ENCODE measurements at regions of chr15 and their contacts with region 1.

Region 1: GRCh38 chr15:50765195-50765973 is at the start of gene SPPL2A:
- DNase-seq: peak; percentile 45 to 90 (median 61)
- ATAC-seq: peak; percentile 91
- H3K4me3 ChIP-seq: peak within 1 kb of the TSS; percentile 77
- H3K4me3 Mint-ChIP-seq: peak within 1 kb of the TSS; percentile 81 to 97 (median 94)
- H3K27ac ChIP-seq: peak within 1 kb of the TSS; percentile 90
- H3K27ac Mint-ChIP-seq: peak within 1 kb of the TSS; percentile 85 to 98 (median 93)
- H3K4me1 ChIP-seq: no peaks in the 10 kb centered on the region
- H3K4me1 Mint-ChIP-seq: peaks cover 27 to 58% (median 51%) of the 10 kb centered on the region in 7 donors
- H3K27me3 ChIP-seq: no peaks in the 10 kb centered on the region
- H3K27me3 Mint-ChIP-seq: no peaks in the 10 kb centered on the region
- total RNA-seq, gene SPPL2A: 42.1 to 100 (median 58.1) TPM

Region 2: GRCh38 chr15:49155110-49155833 is 1610.1 kb before region 1 on chr15 and contains the start of gene COPS2:
- CTCF ChIA-PET with region 1: no interaction called
- POLR2A ChIA-PET with region 1: no interaction called
- intact Hi-C with region 1: loop called in 1 of 2 experiments (anchors 10 kb)
- DNase-seq: peak; percentile 69 to 96 (median 94)
- ATAC-seq: peak; percentile 99
- H3K4me3 ChIP-seq: peak within 1 kb of the TSS; percentile 88
- H3K4me3 Mint-ChIP-seq: peak within 1 kb of the TSS; percentile 95 to 100 (median 98)
- H3K27ac ChIP-seq: peak within 1 kb of the TSS; percentile 93
- H3K27ac Mint-ChIP-seq: peak within 1 kb of the TSS; percentile 93 to 100 (median 97)
- H3K4me1 ChIP-seq: peaks cover 9 to 25% of the 10 kb centered on the region in 2 donors
- H3K4me1 Mint-ChIP-seq: peaks cover 40 to 72% (median 59%) of the 10 kb centered on the region in 7 donors
- H3K27me3 ChIP-seq: no peaks in the 10 kb centered on the region
- H3K27me3 Mint-ChIP-seq: no peaks in the 10 kb centered on the region
- total RNA-seq, gene COPS2: 51.0 to 91.5 (median 63.6) TPM

Region 3: DNA sequence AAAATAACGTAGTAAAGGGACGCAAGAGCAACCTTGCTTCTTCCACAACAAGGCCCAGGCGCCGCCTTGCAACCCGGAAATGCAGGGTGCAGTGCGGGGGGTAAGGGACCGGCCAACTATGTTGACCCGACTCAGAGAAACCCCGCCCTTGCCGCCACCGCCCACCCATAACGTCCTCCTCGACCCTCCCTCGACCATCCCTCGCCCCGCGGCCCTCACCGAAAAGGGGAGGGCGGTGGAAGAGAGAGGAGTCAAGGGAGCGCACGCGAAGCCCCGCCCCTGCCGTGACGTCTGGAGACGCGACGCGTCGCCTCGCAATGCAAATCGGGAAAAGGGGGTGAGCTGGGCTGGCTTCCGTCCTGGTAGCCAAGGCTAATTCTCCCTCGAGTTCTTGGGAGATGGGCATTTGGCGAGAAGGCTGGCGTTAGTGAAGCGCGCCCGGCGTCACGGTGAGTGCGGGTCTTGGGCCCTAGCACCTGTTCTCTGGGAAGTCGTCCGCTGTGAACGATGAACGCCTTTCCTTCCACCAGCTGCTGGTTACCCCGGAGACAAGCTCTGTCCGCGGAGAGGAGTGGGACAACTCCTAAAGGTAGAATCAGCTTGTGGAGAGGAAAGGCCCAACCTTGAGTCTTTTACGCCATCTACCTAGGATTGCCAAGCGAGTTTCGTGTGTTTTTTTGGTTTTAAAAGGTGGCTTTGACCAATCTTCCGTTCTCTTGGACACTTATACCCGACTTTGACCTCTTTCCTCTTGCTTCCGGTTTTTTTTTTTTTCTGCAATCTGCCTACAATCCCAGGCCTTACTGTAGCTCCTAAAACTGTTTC is 341.1 kb before region 1 on chr15 and contains the start of gene USP8:
- CTCF ChIA-PET with region 1: no interaction called
- POLR2A ChIA-PET with region 1: no interaction called
- intact Hi-C with region 1: loop called (anchors 1 to 10 kb)
- DNase-seq: peak; percentile 88 to 95 (median 93)
- ATAC-seq: peak; percentile 98
- H3K4me3 ChIP-seq: peak within 1 kb of the TSS; percentile 91
- H3K4me3 Mint-ChIP-seq: peak within 1 kb of the TSS; percentile 86 to 100 (median 98)
- H3K27ac ChIP-seq: peak within 1 kb of the TSS; percentile 93
- H3K27ac Mint-ChIP-seq: peak within 1 kb of the TSS; percentile 91 to 99 (median 97)
- H3K4me1 ChIP-seq: peaks cover 8 to 20% of the 10 kb centered on the region in 2 donors
- H3K4me1 Mint-ChIP-seq: peaks cover 23 to 59% (median 34%) of the 10 kb centered on the region in 7 donors
- H3K27me3 ChIP-seq: no peaks in the 10 kb centered on the region
- H3K27me3 Mint-ChIP-seq: no peaks in the 10 kb centered on the region
- total RNA-seq, gene USP8: 52.8 to 61.8 (median 57.1) TPM

Region 4: DNA sequence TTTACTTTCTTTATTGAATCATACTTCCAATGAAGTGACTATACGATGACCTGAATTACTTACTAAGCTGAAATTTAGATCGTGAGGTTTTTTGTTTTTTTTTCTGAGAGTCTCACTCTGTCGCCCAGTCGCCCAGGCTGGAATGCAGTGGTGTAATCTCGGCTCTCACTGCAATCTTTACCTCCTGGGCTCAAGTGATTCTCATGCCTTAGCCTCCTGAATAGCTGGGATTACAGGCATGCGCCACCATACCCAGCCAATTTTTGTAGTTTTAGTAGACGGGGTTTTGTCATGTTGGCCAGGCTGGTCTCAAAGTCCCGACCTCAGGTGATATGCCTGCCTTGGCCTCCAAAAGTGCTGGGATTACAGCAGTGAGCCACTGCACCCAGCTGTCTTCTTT is 28.6 kb before region 1 on chr15:
- CTCF ChIA-PET with region 1: no interaction called
- POLR2A ChIA-PET with region 1: no interaction called
- intact Hi-C with region 1: loop called in 1 of 2 experiments (anchors 2 kb)
- DNase-seq: no peak
- ATAC-seq: no peak
- H3K4me3 ChIP-seq: no peak overlapping the region
- H3K4me3 Mint-ChIP-seq: no peak overlapping the region
- H3K27ac ChIP-seq: no peak overlapping the region
- H3K27ac Mint-ChIP-seq: no peak overlapping the region
- H3K4me1 ChIP-seq: no peaks in the 10 kb centered on the region
- H3K4me1 Mint-ChIP-seq: no peaks in the 10 kb centered on the region
- H3K27me3 ChIP-seq: no peaks in the 10 kb centered on the region
- H3K27me3 Mint-ChIP-seq: no peaks in the 10 kb centered on the region

Region 5: GRCh38 chr15:50876989-50877360 is 111.6 kb after region 1 on chr15:
- CTCF ChIA-PET with region 1: no interaction called
- POLR2A ChIA-PET with region 1: interaction called, 3 read pairs
- intact Hi-C with region 1: loop called (anchors 1 to 2 kb)
- DNase-seq: peak; percentile 34 to 74 (median 60)
- ATAC-seq: peak; percentile 76
- H3K4me3 ChIP-seq: peak overlapping the region; percentile 37
- H3K4me3 Mint-ChIP-seq: peak overlapping the region in 9 of 10 donors; percentile 20 to 82 (median 69)
- H3K27ac ChIP-seq: no peak overlapping the region
- H3K27ac Mint-ChIP-seq: peak overlapping the region in 5 of 9 donors; percentile 43 to 79 (median 55)
- H3K4me1 ChIP-seq: peaks cover 0 to 5% of the 10 kb centered on the region in 2 donors
- H3K4me1 Mint-ChIP-seq: peaks cover 9 to 49% (median 21%) of the 10 kb centered on the region in 7 donors
- H3K27me3 ChIP-seq: no peaks in the 10 kb centered on the region
- H3K27me3 Mint-ChIP-seq: peaks cover 0 to 19% (median 6%) of the 10 kb centered on the region in 5 donors

Region 6: DNA sequence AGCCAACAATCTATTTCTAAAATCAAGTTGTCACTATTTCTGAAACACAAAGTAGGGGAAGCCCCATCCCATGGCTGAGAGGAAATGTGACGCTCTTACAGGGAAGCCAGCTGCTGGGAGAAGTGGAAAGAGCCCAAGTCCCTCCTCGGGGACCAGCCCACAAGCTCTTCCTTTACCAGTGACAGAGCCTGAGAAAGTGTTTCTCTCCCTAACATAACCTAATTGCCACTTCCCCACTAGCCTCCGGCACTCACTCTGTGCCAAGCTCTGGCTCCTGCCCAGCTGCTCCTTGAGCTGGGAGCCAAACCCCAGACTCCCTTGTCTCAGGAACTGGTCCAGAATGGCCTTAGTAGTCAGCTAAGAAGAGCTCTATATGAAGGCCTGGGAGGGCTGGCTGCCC is 286.4 kb after region 1 on chr15:
- CTCF ChIA-PET with region 1: no interaction called
- POLR2A ChIA-PET with region 1: no interaction called
- intact Hi-C with region 1: no loop called
- DNase-seq: no peak
- ATAC-seq: no peak
- H3K4me3 ChIP-seq: no peak overlapping the region
- H3K4me3 Mint-ChIP-seq: no peak overlapping the region
- H3K27ac ChIP-seq: no peak overlapping the region
- H3K27ac Mint-ChIP-seq: no peak overlapping the region
- H3K4me1 ChIP-seq: no peaks in the 10 kb centered on the region
- H3K4me1 Mint-ChIP-seq: peaks cover 0 to 5% (median 0%) of the 10 kb centered on the region in 7 donors
- H3K27me3 ChIP-seq: no peaks in the 10 kb centered on the region
- H3K27me3 Mint-ChIP-seq: peaks cover 9 to 25% (median 19%) of the 10 kb centered on the region in 5 donors